Posterior cingulate gyrus (tissue), 11 donors: ENCODE measurements at regions of chr13 and their contacts with region 1.

Region 1: GRCh38 chr13:19782049-19782726 is 557 bp downstream of the PSPC1 start:
- DNase-seq: peak; percentile 30 to 95 (median 56)

Region 2: GRCh38 chr13:19633479-19634255 is 148.5 kb before region 1 on chr13 and contains the start of gene MPHOSPH8:
- intact Hi-C with region 1: loop called (anchors 1 kb)
- DNase-seq: peak; percentile 91 to 98 (median 92)

Region 3: DNA sequence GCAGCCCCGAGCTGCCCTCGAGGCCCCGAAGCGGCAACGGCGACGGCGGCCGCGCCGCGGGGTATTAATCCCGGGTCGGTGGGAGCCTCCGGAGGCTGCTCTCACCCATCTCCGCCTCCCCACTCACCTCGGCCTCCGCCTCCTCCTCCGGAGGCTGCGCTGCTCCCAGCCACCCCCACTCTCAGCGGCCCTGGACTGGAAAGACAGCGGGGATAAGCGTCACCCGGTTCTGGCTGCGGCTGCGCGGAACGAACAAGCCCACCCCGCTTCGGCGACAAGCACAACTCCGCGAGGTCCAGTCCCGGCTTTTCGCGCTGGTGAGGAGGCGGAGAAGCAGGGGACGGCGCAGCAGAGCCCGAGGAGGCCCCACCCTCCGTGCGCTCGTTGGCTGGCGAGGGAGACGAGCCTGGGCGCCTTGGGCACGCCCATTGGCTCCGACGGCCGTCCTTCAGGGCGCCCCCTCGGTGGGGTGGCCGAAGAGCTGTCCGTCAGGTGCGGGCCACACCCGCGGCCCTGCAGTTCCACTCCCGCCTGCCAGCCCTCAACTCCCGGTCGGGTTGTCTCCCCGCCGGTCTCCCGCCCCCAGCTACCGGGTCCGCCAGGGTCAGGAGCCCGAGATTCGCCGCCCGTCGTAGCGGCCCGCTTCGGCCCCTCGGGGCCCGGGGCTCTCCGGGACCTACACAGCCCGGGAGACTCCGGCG is 81.3 kb after region 1 on chr13 and contains the start of gene ZMYM5:
- intact Hi-C with region 1: loop called (anchors 2 kb)
- DNase-seq: peak; percentile 98 to 100 (median 99)

Region 4: GRCh38 chr13:19959831-19960652 is 177.9 kb after region 1 on chr13:
- intact Hi-C with region 1: loop called (anchors 2 kb)
- DNase-seq: peak; percentile 76 to 98 (median 80)